Activated CD4-positive, alpha-beta memory T cell treated with anti-CD3 and anti-CD28 coated beads for 36 hours (primary cell): ENCODE measurements at regions of chr10 and their contacts with region 1.

Region 1: GRCh38 chr10:98414932-98415730 is at the start of gene PYROXD2:
- DNase-seq: peak; percentile 72
- H3K4me3 Mint-ChIP-seq: peak within 1 kb of the TSS; percentile 79
- H3K27ac Mint-ChIP-seq: peak within 1 kb of the TSS; percentile 83
- H3K4me1 Mint-ChIP-seq: peaks cover 19% of the 10 kb centered on the region
- H3K27me3 Mint-ChIP-seq: no peaks in the 10 kb centered on the region
- total RNA-seq, gene PYROXD2: 4.7 to 5.3 TPM

Region 2: GRCh38 chr10:98425511-98426352 is 10.6 kb after region 1 on chr10:
- CTCF ChIA-PET with region 1: interaction called, 11 read pairs
- POLR2A ChIA-PET with region 1: no interaction called
- intact Hi-C with region 1: no loop called
- DNase-seq: peak; percentile 66
- H3K4me3 Mint-ChIP-seq: no peak overlapping the region
- H3K27ac Mint-ChIP-seq: no peak overlapping the region
- H3K4me1 Mint-ChIP-seq: no peaks in the 10 kb centered on the region
- H3K27me3 Mint-ChIP-seq: no peaks in the 10 kb centered on the region

Region 3: GRCh38 chr10:98446661-98447221 is 31.6 kb after region 1 on chr10 and contains the start of gene HPS1:
- CTCF ChIA-PET with region 1: no interaction called
- POLR2A ChIA-PET with region 1: no interaction called
- intact Hi-C with region 1: loop called (anchors 5 kb)
- DNase-seq: peak; percentile 89
- H3K4me3 Mint-ChIP-seq: peak within 1 kb of the TSS; percentile 93
- H3K27ac Mint-ChIP-seq: peak within 1 kb of the TSS; percentile 81
- H3K4me1 Mint-ChIP-seq: peaks cover 43% of the 10 kb centered on the region
- H3K27me3 Mint-ChIP-seq: peaks cover 3% of the 10 kb centered on the region
- total RNA-seq, gene HPS1: 42.1 to 44.3 TPM

Region 4: GRCh38 chr10:98460837-98461499 is 45.8 kb after region 1 on chr10:
- CTCF ChIA-PET with region 1: no interaction called
- POLR2A ChIA-PET with region 1: no interaction called
- intact Hi-C with region 1: no loop called
- DNase-seq: no peak
- H3K4me3 Mint-ChIP-seq: no peak overlapping the region
- H3K27ac Mint-ChIP-seq: no peak overlapping the region
- H3K4me1 Mint-ChIP-seq: no peaks in the 10 kb centered on the region
- H3K27me3 Mint-ChIP-seq: peaks cover 12% of the 10 kb centered on the region

Region 5: GRCh38 chr10:98577578-98577977 is 162.4 kb after region 1 on chr10:
- CTCF ChIA-PET with region 1: no interaction called
- POLR2A ChIA-PET with region 1: no interaction called
- intact Hi-C with region 1: no loop called
- DNase-seq: no peak
- H3K4me3 Mint-ChIP-seq: no peak overlapping the region
- H3K27ac Mint-ChIP-seq: no peak overlapping the region
- H3K4me1 Mint-ChIP-seq: no peaks in the 10 kb centered on the region
- H3K27me3 Mint-ChIP-seq: peaks cover 7% of the 10 kb centered on the region